B cell (primary cell): ENCODE measurements at regions of chr4 and their contacts with region 1.

Region 1: DNA sequence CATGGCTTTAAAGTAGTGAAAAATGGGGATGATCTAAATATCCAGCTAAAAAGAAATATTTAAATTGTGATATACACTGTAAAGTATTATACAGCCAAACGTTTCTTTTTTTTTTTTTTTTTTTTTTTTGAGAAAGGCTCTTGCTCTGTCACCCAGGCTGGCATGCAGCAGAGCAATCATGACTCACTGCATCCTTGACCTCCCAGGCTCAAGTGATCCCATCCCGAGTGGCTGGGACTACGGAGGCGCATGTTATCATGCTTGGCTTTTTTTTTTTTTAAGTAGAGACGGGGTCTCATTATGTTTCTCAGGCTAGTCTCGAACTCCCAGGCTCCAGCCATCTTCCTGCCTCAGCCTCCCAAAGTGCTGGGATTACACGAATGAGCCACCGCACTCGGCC is 17.1 kb downstream of the SMIM14 start:
- DNase-seq: no peak
- ATAC-seq: no peak
- H3K4me3 ChIP-seq: no peak overlapping the region
- H3K4me3 Mint-ChIP-seq: no peak overlapping the region
- H3K27ac ChIP-seq: peak overlapping the region in 1 of 2 donors; percentile 48
- H3K27ac Mint-ChIP-seq: peak overlapping the region; percentile 17
- H3K4me1 ChIP-seq: peaks cover 47 to 55% of the 10 kb centered on the region in 2 donors
- H3K4me1 Mint-ChIP-seq: peaks cover 64% of the 10 kb centered on the region
- H3K27me3 ChIP-seq: no peaks in the 10 kb centered on the region
- H3K27me3 Mint-ChIP-seq: no peaks in the 10 kb centered on the region
- CTCF ChIP-seq: no peak

Region 2: GRCh38 chr4:39609454-39609931 is 12.1 kb before region 1 on chr4:
- CTCF ChIA-PET with region 1: interaction called, 9 read pairs
- POLR2A ChIA-PET with region 1: interaction called, 8 read pairs
- intact Hi-C with region 1: loop called (anchors 1 kb)
- DNase-seq: peak; percentile 73
- ATAC-seq: peak; percentile 79
- H3K4me3 ChIP-seq: peak overlapping the region in 3 of 5 experiments; percentile 38 to 47 (median 45)
- H3K4me3 Mint-ChIP-seq: peak overlapping the region; percentile 73
- H3K27ac ChIP-seq: peak overlapping the region; percentile 57 to 69
- H3K27ac Mint-ChIP-seq: peak overlapping the region; percentile 73
- H3K4me1 ChIP-seq: peaks cover 49 to 55% of the 10 kb centered on the region in 2 donors
- H3K4me1 Mint-ChIP-seq: peaks cover 58% of the 10 kb centered on the region
- H3K27me3 ChIP-seq: no peaks in the 10 kb centered on the region
- H3K27me3 Mint-ChIP-seq: no peaks in the 10 kb centered on the region
- CTCF ChIP-seq: no peak